Caco-2 (cell line): ENCODE measurements at regions of chr5 and their contacts with region 1.

Region 1: GRCh38 chr5:133075572-133076536 is 24.0 kb downstream of the HSPA4 start:
- DNase-seq: peak in 1 of 2 experiments; percentile 18
- H3K4me3 ChIP-seq: no peak overlapping the region
- H3K4me3 Mint-ChIP-seq: no peak overlapping the region
- H3K27ac Mint-ChIP-seq: no peak overlapping the region
- H3K4me1 ChIP-seq: peaks cover 13% of the 10 kb centered on the region
- H3K4me1 Mint-ChIP-seq: peaks cover 14% of the 10 kb centered on the region
- H3K27me3 ChIP-seq: no peaks in the 10 kb centered on the region
- H3K27me3 Mint-ChIP-seq: no peaks in the 10 kb centered on the region
- CTCF ChIP-seq: no peak

Region 2: DNA sequence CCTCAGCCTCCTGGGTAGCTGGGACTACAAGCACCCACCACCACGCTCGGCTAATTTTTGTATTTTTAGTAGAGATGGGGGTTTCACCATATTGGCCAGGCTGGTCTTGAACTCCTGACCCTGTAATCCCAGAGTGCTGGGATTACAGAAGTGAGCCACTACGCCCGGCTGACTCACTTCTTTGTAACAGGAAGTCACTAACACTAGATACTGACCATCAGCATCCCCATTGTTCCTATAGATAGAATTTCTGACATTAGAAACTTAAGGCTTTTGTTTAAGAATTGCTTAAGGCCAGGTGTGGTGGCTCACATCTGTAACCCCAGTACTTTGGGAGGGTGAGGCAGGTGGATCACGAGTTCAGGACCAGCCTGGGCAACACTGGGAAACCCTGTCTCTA is 160.2 kb before region 1 on chr5:
- CTCF ChIA-PET with region 1: no interaction called
- POLR2A ChIA-PET with region 1: interaction called, 16 read pairs
- intact Hi-C with region 1: no loop called
- DNase-seq: no peak
- H3K4me3 ChIP-seq: no peak overlapping the region
- H3K4me3 Mint-ChIP-seq: no peak overlapping the region
- H3K27ac Mint-ChIP-seq: no peak overlapping the region
- H3K4me1 ChIP-seq: no peaks in the 10 kb centered on the region
- H3K4me1 Mint-ChIP-seq: no peaks in the 10 kb centered on the region
- H3K27me3 ChIP-seq: no peaks in the 10 kb centered on the region
- H3K27me3 Mint-ChIP-seq: no peaks in the 10 kb centered on the region
- CTCF ChIP-seq: no peak

Region 3: GRCh38 chr5:133032852-133033742 is 42.8 kb before region 1 on chr5:
- CTCF ChIA-PET with region 1: no interaction called
- POLR2A ChIA-PET with region 1: no interaction called
- intact Hi-C with region 1: no loop called
- DNase-seq: no peak
- H3K4me3 ChIP-seq: no peak overlapping the region
- H3K4me3 Mint-ChIP-seq: peak overlapping the region; percentile 40
- H3K27ac Mint-ChIP-seq: peak overlapping the region; percentile 80
- H3K4me1 ChIP-seq: peaks cover 16% of the 10 kb centered on the region
- H3K4me1 Mint-ChIP-seq: peaks cover 17% of the 10 kb centered on the region
- H3K27me3 ChIP-seq: no peaks in the 10 kb centered on the region
- H3K27me3 Mint-ChIP-seq: no peaks in the 10 kb centered on the region
- CTCF ChIP-seq: no peak

Region 4: DNA sequence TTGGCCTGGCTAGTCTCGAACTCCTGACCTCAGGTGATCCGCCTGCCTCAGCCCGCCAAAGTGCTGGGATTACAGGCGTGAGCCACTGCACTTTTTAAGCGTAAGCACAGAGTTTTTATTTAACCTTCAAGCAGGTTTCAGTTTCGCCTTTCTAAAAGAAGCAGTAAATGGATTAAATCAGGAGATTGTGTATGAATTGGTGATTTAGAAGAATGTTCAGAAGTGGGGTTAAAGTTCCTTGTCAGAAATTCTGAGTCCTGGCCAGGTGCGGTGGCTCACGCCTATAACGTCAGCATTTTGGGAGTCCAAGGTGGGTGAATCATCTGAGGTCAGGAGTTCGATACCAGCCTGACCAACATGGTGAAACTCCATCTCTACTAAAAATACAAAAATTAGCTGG is 11.9 kb before region 1 on chr5:
- CTCF ChIA-PET with region 1: no interaction called
- POLR2A ChIA-PET with region 1: no interaction called
- intact Hi-C with region 1: no loop called
- DNase-seq: no peak
- H3K4me3 ChIP-seq: no peak overlapping the region
- H3K4me3 Mint-ChIP-seq: no peak overlapping the region
- H3K27ac Mint-ChIP-seq: no peak overlapping the region
- H3K4me1 ChIP-seq: peaks cover 4% of the 10 kb centered on the region
- H3K4me1 Mint-ChIP-seq: peaks cover 8% of the 10 kb centered on the region
- H3K27me3 ChIP-seq: no peaks in the 10 kb centered on the region
- H3K27me3 Mint-ChIP-seq: no peaks in the 10 kb centered on the region
- CTCF ChIP-seq: no peak